Astrocyte of the cerebellum (primary cell): ENCODE measurements at regions of chr6 and their contacts with region 1.

Region 1: GRCh38 chr6:130699742-130700141 is 127.5 kb upstream of the SMLR1 start:
- DNase-seq: no peak
- H3K4me3 ChIP-seq: no peak overlapping the region
- CTCF ChIP-seq: no peak

Region 2: GRCh38 chr6:130473886-130474285 is 225.9 kb before region 1 on chr6:
- in situ Hi-C with region 1: no loop called
- DNase-seq: no peak
- H3K4me3 ChIP-seq: no peak overlapping the region
- CTCF ChIP-seq: no peak

Region 3: GRCh38 chr6:130758813-130759212 is 59.1 kb after region 1 on chr6:
- in situ Hi-C with region 1: loop called (anchors 5 kb)
- DNase-seq: no peak
- H3K4me3 ChIP-seq: no peak overlapping the region
- CTCF ChIP-seq: no peak